Body of pancreas (tissue), 4 donors: ENCODE measurements at regions of chr13 and their contacts with region 1.

Region 1: DNA sequence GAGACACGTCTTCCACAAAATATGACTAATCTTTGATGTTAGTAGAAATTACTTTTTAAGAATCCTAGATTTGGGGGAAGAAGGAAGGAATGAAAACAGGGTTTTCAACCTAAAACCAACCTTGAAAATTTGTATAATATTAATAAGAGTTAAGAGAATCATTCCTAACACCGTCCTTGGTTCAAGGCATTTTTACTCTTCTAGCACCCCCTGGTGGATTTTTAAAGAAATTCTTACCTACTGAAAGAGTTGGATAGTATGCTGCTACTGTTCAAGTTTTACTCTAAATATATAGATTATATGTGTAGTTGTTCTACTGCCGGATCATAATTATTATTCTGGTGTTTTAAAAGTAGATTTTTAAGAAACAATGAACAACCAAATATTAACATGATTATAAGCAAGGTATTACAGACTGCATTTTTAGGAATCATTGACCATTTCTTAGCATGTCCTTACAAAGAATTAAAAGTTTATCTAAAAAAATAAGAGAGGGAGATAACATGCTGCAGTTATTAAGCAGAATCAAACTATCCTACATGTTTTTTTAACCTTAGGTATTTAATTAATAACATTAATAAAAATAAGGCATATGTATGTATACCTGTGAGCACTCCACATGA is 7.4 kb upstream of the SLITRK6 start:
- DNase-seq: no peak
- ATAC-seq: peak; percentile 70
- H3K4me3 ChIP-seq: no peak overlapping the region
- H3K27ac ChIP-seq: no peak overlapping the region
- H3K4me1 ChIP-seq: no peaks in the 10 kb centered on the region
- H3K27me3 ChIP-seq: no peaks in the 10 kb centered on the region
- CTCF ChIP-seq: peak; percentile 35 to 64 (median 57)
- POLR2A ChIP-seq: no peak

Region 2: DNA sequence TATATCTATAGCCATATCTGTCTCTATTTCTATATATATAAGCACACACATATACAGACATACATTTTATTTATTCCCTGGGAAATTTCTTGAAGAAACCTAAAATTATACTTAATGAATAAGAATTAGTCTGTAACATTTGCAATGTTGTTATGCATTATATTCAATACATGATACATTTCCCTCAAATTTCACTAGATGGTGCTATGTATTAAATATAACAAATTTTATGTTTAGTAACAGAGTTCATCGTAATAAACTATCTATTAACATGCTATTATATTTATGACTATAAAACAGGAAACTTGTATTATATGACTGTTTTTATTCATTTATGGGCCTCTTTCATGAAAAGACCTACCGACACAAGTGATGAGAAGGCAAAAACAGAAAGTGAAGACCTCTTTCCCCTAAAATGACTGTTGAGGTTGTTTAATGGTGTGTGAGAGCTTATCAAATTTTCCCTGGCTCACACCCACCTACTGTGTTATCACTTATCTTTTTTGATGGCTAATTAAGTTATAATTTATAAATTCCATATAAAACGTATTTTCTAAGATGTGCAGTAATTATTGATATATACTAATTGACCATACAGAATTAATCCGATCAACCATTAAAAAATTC is 889.3 kb before region 1 on chr13:
- intact Hi-C with region 1: loop called (anchors 5 kb)
- DNase-seq: no peak
- ATAC-seq: no peak
- H3K4me3 ChIP-seq: no peak overlapping the region
- H3K27ac ChIP-seq: no peak overlapping the region
- H3K4me1 ChIP-seq: no peaks in the 10 kb centered on the region
- H3K27me3 ChIP-seq: no peaks in the 10 kb centered on the region
- CTCF ChIP-seq: peak in 6 of 7 experiments; percentile 13 to 42 (median 37)
- POLR2A ChIP-seq: no peak

Region 3: GRCh38 chr13:85575110-85575509 is 231.6 kb before region 1 on chr13:
- intact Hi-C with region 1: no loop called
- DNase-seq: no peak
- ATAC-seq: no peak
- H3K4me3 ChIP-seq: no peak overlapping the region
- H3K27ac ChIP-seq: no peak overlapping the region
- H3K4me1 ChIP-seq: no peaks in the 10 kb centered on the region
- H3K27me3 ChIP-seq: no peaks in the 10 kb centered on the region
- CTCF ChIP-seq: no peak
- POLR2A ChIP-seq: no peak